Dendritic cell treated with granulocyte-macrophage colony-stimulating factor and Interleukin-4, amounts not matched to agents 40 ng/mL and 50 ng/mL, for 4 days (primary cell): ENCODE measurements at regions of chr7 and their contacts with region 1.

Region 1: DNA sequence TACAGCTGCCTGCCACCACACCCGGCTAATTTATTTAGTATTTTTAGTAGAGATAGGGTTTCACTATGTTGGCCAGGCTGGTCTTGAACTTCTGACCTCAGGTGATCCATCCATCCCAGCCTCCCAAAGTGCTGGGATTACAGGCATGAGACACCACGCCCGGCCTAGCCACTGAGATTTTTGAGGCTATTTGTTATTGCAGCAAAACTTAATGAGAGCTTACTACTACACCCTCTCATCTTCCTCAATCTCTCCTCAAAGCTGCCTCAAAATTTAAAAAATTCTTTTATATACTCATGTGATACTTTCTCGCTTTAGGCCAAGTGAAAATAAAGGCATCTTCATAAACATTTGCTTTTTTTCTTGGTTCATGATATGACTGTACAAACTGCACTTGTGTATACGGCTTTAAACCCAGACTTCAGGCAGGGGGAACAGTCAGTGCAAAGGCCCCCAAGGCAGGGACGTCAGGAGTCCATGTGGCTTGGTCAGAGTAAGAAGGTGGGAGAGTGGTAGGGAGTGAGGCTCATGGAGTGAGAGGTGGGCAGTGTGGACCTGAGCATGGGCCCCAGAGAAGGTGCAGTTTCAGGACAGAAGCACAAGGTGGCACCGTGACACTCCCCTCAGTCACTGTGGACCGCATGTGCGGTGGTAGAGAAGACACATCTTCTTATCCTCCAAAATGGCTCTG is 55.5 kb downstream of the SYPL1 start:
- H3K4me3 Mint-ChIP-seq: peak overlapping the region; percentile 44
- H3K27ac Mint-ChIP-seq: no peak overlapping the region
- H3K4me1 Mint-ChIP-seq: peaks cover 31% of the 10 kb centered on the region
- H3K27me3 Mint-ChIP-seq: peaks cover 44% of the 10 kb centered on the region

Region 2: GRCh38 chr7:105808703-105809590 is 247.7 kb before region 1 on chr7:
- intact Hi-C with region 1: no loop called
- H3K4me3 Mint-ChIP-seq: no peak overlapping the region
- H3K27ac Mint-ChIP-seq: peak overlapping the region; percentile 61
- H3K4me1 Mint-ChIP-seq: peaks cover 67% of the 10 kb centered on the region
- H3K27me3 Mint-ChIP-seq: no peaks in the 10 kb centered on the region

Region 3: GRCh38 chr7:106153891-106154449 is 97.3 kb after region 1 on chr7:
- intact Hi-C with region 1: loop called (anchors 1 kb)
- H3K4me3 Mint-ChIP-seq: no peak overlapping the region
- H3K27ac Mint-ChIP-seq: no peak overlapping the region
- H3K4me1 Mint-ChIP-seq: peaks cover 9% of the 10 kb centered on the region
- H3K27me3 Mint-ChIP-seq: peaks cover 69% of the 10 kb centered on the region

Region 4: DNA sequence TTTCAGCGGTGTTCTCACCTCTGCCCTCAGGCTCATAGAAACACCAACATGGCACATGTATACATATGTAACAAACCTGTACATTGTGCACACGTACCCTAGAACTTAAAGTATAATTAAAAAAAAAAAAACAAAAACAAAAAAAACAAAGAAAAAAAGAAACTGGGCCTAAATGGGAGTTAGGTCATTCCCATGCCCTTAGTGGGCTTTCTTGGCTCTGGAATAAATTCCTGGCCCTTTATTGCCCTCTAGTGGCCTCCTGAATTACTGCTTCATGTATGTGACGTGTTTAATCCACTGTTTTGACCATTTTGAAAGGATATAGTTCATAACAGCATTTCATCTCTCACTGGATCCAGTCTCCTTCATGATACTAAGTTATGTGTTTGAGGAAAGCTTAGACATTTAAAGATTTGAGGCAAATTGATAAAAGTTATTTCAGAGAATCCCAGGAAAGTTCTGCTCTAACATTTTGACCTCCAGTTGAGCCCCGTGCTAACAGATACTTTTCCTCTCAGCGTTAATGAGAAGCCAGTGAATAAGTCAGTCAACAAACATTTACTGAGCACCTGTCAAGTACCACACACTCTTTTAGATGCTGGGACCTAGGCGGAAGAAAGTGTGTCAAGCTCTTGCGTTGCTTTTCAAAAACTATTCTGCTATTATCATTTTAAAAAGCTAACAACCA is 110.1 kb after region 1 on chr7:
- intact Hi-C with region 1: loop called (anchors 1 kb)
- H3K4me3 Mint-ChIP-seq: no peak overlapping the region
- H3K27ac Mint-ChIP-seq: no peak overlapping the region
- H3K4me1 Mint-ChIP-seq: no peaks in the 10 kb centered on the region
- H3K27me3 Mint-ChIP-seq: peaks cover 41% of the 10 kb centered on the region

Region 5: GRCh38 chr7:106273009-106273668 is 216.5 kb after region 1 on chr7:
- intact Hi-C with region 1: no loop called
- H3K4me3 Mint-ChIP-seq: no peak overlapping the region
- H3K27ac Mint-ChIP-seq: no peak overlapping the region
- H3K4me1 Mint-ChIP-seq: peaks cover 17% of the 10 kb centered on the region
- H3K27me3 Mint-ChIP-seq: no peaks in the 10 kb centered on the region